Esophagus squamous epithelium (tissue), 5 donors: ENCODE measurements at regions of chr11 and their contacts with region 1.

Region 1: DNA sequence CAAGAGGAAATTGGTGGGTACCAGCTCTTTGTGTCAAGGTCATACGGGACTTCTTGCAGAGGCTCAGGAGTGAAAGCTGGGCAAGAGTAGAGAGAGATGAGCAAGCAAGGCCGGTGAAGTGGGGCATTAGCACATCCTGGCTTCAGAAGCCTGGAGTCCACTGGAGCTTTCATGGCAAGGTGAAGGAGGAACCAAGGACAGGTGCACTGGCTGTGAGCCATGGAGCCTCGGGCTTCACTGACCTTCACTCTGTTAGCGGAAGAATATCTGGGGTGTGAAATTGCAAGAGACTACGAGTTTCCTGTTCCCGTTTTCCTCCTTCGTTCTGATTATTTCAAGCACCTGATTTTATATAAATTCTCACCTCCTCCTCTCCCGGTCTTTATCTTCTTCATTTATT is 25.9 kb upstream of the ST14 start:
- DNase-seq: no peak
- H3K4me3 ChIP-seq: no peak overlapping the region
- H3K27ac ChIP-seq: no peak overlapping the region
- H3K4me1 ChIP-seq: peaks cover 0 to 6% (median under 1%) of the 10 kb centered on the region in 3 donors
- H3K27me3 ChIP-seq: no peaks in the 10 kb centered on the region
- CTCF ChIP-seq: no peak
- POLR2A ChIP-seq: no peak

Region 2: DNA sequence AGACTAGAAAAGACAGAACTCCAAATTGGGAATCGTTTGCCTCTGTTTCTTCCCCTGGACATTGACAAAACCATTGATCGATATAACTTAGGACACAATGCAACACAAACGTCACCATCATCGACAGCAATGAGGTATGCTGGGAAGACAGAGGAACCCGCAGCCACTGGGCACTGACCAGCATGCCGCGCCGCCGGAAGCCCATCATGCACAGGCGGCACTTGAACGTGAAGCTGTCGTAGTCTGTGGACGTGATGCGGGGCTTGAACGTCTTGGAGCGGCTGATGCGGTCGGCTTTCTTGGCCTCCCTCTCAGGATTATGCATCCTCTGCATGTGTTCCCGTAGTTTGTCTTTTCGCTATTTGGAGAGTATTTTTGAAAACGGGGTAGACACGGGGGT is 215.4 kb before region 1 on chr11:
- intact Hi-C with region 1: loop called (anchors 2 kb)
- DNase-seq: no peak
- H3K4me3 ChIP-seq: no peak overlapping the region
- H3K27ac ChIP-seq: no peak overlapping the region
- H3K4me1 ChIP-seq: no peaks in the 10 kb centered on the region
- H3K27me3 ChIP-seq: no peaks in the 10 kb centered on the region
- CTCF ChIP-seq: no peak
- POLR2A ChIP-seq: no peak

Region 3: GRCh38 chr11:130189492-130190210 is 55.9 kb after region 1 on chr11:
- intact Hi-C with region 1: no loop called
- DNase-seq: no peak
- H3K4me3 ChIP-seq: no peak overlapping the region
- H3K27ac ChIP-seq: peak overlapping the region in 3 of 4 donors; percentile 7 to 32 (median 18)
- H3K4me1 ChIP-seq: peaks cover 0 to 20% (median 6%) of the 10 kb centered on the region in 3 donors
- H3K27me3 ChIP-seq: no peaks in the 10 kb centered on the region
- CTCF ChIP-seq: no peak
- POLR2A ChIP-seq: no peak

Region 4: DNA sequence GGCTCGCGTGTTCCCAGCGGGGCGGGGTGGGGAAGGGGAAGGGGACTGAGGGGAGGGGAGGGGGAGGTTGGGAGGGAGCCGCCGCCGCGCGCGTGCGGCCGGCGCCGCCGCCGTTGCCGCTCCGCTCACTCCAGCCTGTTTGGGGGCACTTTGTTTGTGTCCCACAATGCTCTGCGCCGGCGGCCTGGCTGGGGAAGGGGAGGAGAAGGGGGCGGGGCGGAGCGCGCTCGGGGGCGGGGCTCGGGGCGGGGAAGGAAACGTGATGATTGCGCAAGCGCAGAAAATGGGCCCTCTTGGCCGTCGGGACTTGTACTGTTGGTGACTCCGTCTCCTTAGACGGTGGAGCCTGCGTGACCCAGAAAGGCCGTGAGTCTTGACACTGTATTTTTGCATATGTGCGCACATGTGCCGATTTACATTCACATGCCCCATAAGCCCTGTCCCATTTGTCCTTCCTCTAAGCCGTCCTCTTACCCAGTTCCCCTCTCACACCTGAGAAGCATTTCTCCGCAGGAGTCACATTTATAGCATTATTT is 181.1 kb after region 1 on chr11 and contains the start of gene ZBTB44:
- intact Hi-C with region 1: no loop called
- DNase-seq: peak; percentile 73
- H3K4me3 ChIP-seq: peak within 1 kb of the TSS; percentile 81 to 96 (median 88)
- H3K27ac ChIP-seq: peak within 1 kb of the TSS; percentile 92 to 97 (median 96)
- H3K4me1 ChIP-seq: peaks cover 7 to 73% (median 28%) of the 10 kb centered on the region in 3 donors
- H3K27me3 ChIP-seq: no peaks in the 10 kb centered on the region
- CTCF ChIP-seq: no peak
- POLR2A ChIP-seq: peak in 1 of 4 donors; percentile 64
- total RNA-seq, gene ZBTB44: 23.1 to 76.7 (median 33.0) TPM